Left cardiac atrium (tissue), 4 donors: ENCODE measurements at regions of chr11 and their contacts with region 1.

Region 1: DNA sequence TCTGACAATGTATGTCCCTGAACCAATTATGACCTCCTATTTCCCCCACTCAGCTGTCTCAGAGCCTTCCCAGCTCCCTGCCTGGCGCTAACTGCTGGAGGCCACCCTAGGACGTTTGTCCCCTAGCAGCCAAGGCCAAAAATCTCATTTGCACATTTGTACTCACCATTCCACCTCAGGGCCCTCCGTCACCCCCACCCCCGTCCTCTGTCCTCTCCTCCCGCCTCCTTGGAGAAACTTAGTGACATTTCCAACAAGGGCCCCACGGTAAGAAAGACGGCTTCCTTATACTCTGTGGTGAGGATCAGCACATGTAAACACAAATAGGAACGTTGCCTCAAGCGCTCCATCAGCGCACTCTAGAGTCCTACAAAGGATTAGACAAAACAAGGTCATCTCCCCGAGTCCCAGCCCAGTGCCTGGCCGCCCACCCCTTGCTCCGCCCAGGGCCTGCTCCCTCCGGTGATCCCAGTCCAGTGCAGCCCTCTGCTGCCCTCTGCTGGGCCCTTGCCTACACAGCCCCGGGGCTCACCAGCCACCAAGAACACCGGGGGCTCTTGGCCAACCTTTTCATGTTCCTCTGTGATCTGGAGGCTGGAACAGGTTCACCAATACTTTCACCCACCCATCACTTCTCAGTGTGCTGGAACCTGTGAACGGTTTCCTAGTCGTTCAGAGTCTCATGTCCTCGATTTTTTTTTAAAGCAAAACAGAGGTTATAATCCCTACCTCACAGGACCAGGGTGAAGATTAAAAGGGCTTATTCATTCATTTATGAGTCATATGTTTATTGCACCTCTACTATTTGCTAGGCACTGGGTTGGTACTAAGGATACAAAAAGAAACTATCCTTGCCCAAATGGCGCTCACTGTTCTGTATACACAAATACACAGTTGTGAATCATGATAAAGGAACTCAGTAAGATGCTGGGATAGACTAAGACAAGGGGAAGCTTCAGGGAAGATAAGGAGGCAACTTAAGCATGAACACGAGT is 15.3 kb upstream of the CTR9 start:
- DNase-seq: peak; percentile 96
- ATAC-seq: peak; percentile 100

Region 2: DNA sequence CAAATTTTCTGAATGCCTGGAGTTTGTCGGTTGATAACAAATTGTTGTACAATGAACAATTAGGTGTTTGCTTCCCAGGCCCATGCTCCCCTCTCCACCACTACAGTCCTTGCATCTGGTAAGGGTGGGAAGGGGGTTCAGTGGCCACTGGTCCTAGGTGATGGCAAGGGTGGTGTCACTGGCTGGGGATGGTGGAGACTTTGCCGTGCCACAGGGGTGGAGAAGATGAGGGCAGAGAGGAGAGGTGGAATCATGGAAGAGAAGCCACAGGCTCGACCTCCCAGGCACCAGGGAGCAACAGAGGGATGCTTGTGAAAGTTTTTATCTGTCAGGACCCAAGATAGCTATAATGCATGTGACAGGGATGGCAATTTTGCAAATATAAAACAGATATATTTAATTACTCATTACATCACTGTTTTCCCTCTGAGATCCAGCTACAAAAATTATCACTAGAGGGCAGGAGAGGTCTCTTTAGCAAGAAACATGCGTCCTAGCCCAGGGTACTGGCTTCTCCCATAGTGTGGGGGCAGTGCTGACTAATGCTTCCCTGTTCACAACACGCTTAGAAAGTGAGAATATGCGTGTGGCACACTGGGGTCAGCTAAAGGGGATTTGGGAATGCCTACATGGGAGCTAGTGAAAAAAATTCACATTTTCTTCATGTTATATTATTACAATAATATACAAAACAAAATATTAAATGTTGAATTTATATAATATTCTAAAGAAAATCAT is 329.8 kb before region 1 on chr11:
- intact Hi-C with region 1: loop called (anchors 2 to 5 kb)
- DNase-seq: peak; percentile 77
- ATAC-seq: peak; percentile 93

Region 3: DNA sequence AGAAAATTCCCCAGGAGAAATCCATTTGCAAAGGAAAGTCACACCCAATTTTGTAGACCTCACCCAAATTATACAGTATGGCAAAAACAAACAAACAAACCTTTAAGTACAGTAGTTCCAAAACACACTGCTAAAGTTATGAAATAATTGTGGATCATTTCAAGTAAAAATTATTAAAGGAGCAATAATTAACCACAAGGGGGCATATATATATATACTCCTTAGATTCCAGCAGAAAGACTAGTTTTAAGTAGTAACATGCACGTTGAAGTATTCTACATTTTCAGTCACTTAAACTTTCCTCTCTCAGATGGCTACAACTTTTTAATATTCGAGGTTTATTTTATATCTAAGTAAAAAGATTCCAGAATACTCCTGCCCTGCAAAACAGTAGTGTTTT is 221.6 kb before region 1 on chr11:
- intact Hi-C with region 1: loop called in 1 of 2 experiments (anchors 5 kb)
- DNase-seq: no peak
- ATAC-seq: no peak

Region 4: DNA sequence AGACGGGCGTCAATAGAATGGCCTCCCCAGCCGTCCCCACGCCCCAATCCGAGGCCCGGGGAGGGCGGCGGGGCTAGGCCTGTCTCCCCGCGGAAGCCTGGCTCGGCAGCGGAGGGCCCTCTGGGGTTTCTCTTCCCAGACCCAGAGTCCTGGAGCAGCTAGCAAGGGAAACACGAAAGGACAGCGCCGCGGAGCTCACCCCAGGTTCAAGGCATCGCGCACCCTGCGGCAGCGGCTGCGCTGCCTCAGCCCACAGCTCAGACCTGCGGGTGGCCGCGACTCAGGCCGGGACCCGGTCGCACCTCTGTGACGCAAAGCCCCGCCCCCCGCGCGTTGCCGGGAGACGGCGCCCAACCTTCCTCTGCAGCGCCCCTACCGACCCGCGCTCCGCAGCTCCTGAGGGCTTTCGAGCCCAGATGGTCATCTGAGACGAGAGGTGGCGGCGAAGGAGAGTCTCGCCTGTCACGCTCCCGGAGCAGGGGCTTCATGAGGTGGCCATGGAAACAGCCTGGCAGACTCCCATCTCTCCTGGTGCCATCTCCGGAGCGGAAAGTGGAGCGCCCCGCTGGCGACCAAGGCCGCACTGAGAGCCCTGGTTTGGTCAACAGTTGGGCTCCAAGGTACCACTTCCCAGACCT is 194.7 kb before region 1 on chr11 and contains the start of gene RNF141:
- intact Hi-C with region 1: loop called in 1 of 2 experiments (anchors 10 kb)
- DNase-seq: peak; percentile 97
- ATAC-seq: peak; percentile 99 to 100
- total RNA-seq, gene RNF141: 34.7 to 34.8 TPM

Region 5: GRCh38 chr11:10623797-10624761 is 111.7 kb before region 1 on chr11:
- intact Hi-C with region 1: loop called in 1 of 2 experiments (anchors 5 kb)
- DNase-seq: peak; percentile 36
- ATAC-seq: peak; percentile 47 to 52

Region 6: GRCh38 chr11:10653926-10654810 is 81.6 kb before region 1 on chr11:
- intact Hi-C with region 1: loop called in 1 of 2 experiments (anchors 5 kb)
- DNase-seq: no peak
- ATAC-seq: peak; percentile 36 to 60

Region 7: DNA sequence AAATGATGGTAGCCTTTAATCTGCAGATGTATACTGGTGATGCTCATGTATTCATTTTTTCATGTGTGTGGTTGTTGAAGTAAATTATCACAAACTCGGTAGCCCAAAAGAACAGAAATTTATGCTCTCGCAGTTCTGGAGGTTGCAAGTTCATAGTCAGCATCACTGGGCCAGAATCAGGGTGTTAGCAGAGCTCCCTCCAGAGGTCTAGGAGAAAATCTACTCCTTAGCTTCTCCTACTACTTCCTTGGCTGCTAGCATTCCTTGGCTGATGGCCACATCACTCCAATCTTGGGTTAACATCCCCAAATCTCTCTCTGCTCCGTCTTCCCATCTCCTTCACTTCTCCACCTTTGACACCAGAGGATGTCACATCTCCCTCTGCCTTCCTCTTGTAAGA is 931.3 kb after region 1 on chr11:
- intact Hi-C with region 1: no loop called
- DNase-seq: no peak
- ATAC-seq: no peak